ENCODE measurements at regions of chr20 and their contacts with region 1.

Region 1: GRCh38 chr20:35502352-35502751 is 27.1 kb downstream of the C20orf173 start:
- DNase-seq: peak; percentile 86
- ATAC-seq: peak; percentile 94
- H3K4me3 ChIP-seq: no peak overlapping the region
- H3K4me3 Mint-ChIP-seq: peak overlapping the region; percentile 54
- H3K27ac ChIP-seq: peak overlapping the region in 1 of 2 donors; percentile 68
- H3K27ac Mint-ChIP-seq: peak overlapping the region; percentile 84
- H3K4me1 ChIP-seq: peaks cover 44 to 53% of the 10 kb centered on the region in 2 donors
- H3K4me1 Mint-ChIP-seq: peaks cover 57% of the 10 kb centered on the region
- H3K27me3 ChIP-seq: no peaks in the 10 kb centered on the region
- H3K27me3 Mint-ChIP-seq: no peaks in the 10 kb centered on the region
- CTCF ChIP-seq: no peak

Region 2: GRCh38 chr20:35395728-35396127 is 106.6 kb before region 1 on chr20:
- CTCF ChIA-PET with region 1: no interaction called
- POLR2A ChIA-PET with region 1: no interaction called
- intact Hi-C with region 1: no loop called
- DNase-seq: no peak
- ATAC-seq: no peak
- H3K4me3 ChIP-seq: no peak overlapping the region
- H3K4me3 Mint-ChIP-seq: no peak overlapping the region
- H3K27ac ChIP-seq: no peak overlapping the region
- H3K27ac Mint-ChIP-seq: no peak overlapping the region
- H3K4me1 ChIP-seq: no peaks in the 10 kb centered on the region
- H3K4me1 Mint-ChIP-seq: no peaks in the 10 kb centered on the region
- H3K27me3 ChIP-seq: no peaks in the 10 kb centered on the region
- H3K27me3 Mint-ChIP-seq: no peaks in the 10 kb centered on the region
- CTCF ChIP-seq: no peak

Region 3: GRCh38 chr20:35490736-35491181 is 11.6 kb before region 1 on chr20:
- CTCF ChIA-PET with region 1: interaction called, 10 read pairs
- POLR2A ChIA-PET with region 1: interaction called, 7 read pairs
- intact Hi-C with region 1: loop called (anchors 1 kb)
- DNase-seq: peak; percentile 81
- ATAC-seq: peak; percentile 100
- H3K4me3 ChIP-seq: peak overlapping the region; percentile 73 to 92 (median 85)
- H3K4me3 Mint-ChIP-seq: peak overlapping the region; percentile 98
- H3K27ac ChIP-seq: peak overlapping the region; percentile 83 to 92
- H3K27ac Mint-ChIP-seq: peak overlapping the region; percentile 96
- H3K4me1 ChIP-seq: peaks cover 39 to 58% of the 10 kb centered on the region in 2 donors
- H3K4me1 Mint-ChIP-seq: peaks cover 54% of the 10 kb centered on the region
- H3K27me3 ChIP-seq: no peaks in the 10 kb centered on the region
- H3K27me3 Mint-ChIP-seq: no peaks in the 10 kb centered on the region
- CTCF ChIP-seq: no peak

Region 4: DNA sequence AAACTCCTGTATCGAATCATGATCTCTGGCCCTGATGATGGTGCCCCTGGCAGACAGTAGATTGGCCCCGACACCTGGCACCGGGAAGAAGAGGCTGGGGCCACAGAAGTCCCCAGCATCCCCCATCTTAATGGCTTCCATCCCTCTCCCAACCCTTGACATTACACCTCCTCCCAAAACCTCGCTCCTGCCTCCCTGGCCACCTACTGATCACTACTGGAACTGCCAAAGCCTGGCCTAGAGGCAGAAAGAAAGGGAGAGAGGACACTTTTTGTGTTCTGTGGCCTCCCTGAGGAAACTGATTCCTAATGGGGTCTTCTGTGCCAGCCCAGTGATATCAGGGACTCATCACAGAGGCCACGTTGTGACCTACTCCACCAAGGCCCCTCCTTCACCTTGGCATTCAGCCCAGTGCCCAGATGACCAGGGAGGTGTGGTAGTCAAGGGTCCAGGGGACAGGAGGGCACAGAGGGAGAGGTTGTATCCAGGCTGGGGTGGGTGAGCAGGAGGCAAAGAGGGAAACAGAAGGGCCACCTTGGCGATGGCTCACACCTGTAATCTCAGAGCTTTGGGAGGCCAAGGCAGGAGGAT is 21.0 kb after region 1 on chr20:
- CTCF ChIA-PET with region 1: no interaction called
- POLR2A ChIA-PET with region 1: no interaction called
- intact Hi-C with region 1: loop called (anchors 1 kb)
- DNase-seq: no peak
- ATAC-seq: peak; percentile 41
- H3K4me3 ChIP-seq: no peak overlapping the region
- H3K4me3 Mint-ChIP-seq: no peak overlapping the region
- H3K27ac ChIP-seq: no peak overlapping the region
- H3K27ac Mint-ChIP-seq: no peak overlapping the region
- H3K4me1 ChIP-seq: no peaks in the 10 kb centered on the region
- H3K4me1 Mint-ChIP-seq: no peaks in the 10 kb centered on the region
- H3K27me3 ChIP-seq: no peaks in the 10 kb centered on the region
- H3K27me3 Mint-ChIP-seq: no peaks in the 10 kb centered on the region
- CTCF ChIP-seq: peak; percentile 59

Measured in B cell (primary cell).